Activated CD4-positive, alpha-beta memory T cell treated with anti-CD3 and anti-CD28 coated beads for 36 hours (primary cell): ENCODE measurements at regions of chr4 and their contacts with region 1.

Region 1: GRCh38 chr4:55635741-55636655 is at the start of gene NMU:
- DNase-seq: peak; percentile 61
- H3K4me3 Mint-ChIP-seq: peak within 1 kb of the TSS; percentile 61
- H3K27ac Mint-ChIP-seq: no peak within 1 kb of the TSS
- H3K4me1 Mint-ChIP-seq: peaks cover 14% of the 10 kb centered on the region
- H3K27me3 Mint-ChIP-seq: peaks cover 46% of the 10 kb centered on the region
- total RNA-seq, gene NMU: 0.63 TPM in 1 of 2 experiments, not detected in the other

Region 2: GRCh38 chr4:55424791-55425190 is 211.2 kb before region 1 on chr4:
- CTCF ChIA-PET with region 1: no interaction called
- POLR2A ChIA-PET with region 1: no interaction called
- intact Hi-C with region 1: no loop called
- DNase-seq: no peak
- H3K4me3 Mint-ChIP-seq: no peak overlapping the region
- H3K27ac Mint-ChIP-seq: no peak overlapping the region
- H3K4me1 Mint-ChIP-seq: no peaks in the 10 kb centered on the region
- H3K27me3 Mint-ChIP-seq: no peaks in the 10 kb centered on the region

Region 3: DNA sequence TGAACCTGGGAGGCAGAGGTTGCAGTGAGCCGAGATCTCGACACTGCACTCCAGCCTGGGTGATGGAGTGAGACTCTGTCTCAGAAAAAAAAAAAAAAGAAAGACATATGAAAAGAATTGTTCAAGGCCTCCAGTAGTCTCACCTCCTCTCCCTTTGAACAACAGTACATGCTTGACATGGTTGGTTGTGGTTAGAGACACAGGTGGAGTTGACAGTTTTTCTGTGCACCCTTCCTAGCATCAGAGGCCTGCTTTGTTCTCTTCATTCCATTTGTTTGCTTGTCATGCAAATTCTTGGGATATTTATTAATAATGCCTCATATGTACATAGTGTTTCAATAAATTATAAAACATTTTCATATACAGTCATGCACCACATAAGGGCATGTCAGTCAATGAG is 25.6 kb before region 1 on chr4:
- CTCF ChIA-PET with region 1: no interaction called
- POLR2A ChIA-PET with region 1: no interaction called
- intact Hi-C with region 1: loop called (anchors 1 kb)
- DNase-seq: no peak
- H3K4me3 Mint-ChIP-seq: no peak overlapping the region
- H3K27ac Mint-ChIP-seq: no peak overlapping the region
- H3K4me1 Mint-ChIP-seq: no peaks in the 10 kb centered on the region
- H3K27me3 Mint-ChIP-seq: peaks cover 2% of the 10 kb centered on the region